Activated naive CD4-positive, alpha-beta T cell treated with anti-CD3 and anti-CD28 coated beads for 36 hours (primary cell): ENCODE measurements at regions of chr10 and their contacts with region 1.

Region 1: DNA sequence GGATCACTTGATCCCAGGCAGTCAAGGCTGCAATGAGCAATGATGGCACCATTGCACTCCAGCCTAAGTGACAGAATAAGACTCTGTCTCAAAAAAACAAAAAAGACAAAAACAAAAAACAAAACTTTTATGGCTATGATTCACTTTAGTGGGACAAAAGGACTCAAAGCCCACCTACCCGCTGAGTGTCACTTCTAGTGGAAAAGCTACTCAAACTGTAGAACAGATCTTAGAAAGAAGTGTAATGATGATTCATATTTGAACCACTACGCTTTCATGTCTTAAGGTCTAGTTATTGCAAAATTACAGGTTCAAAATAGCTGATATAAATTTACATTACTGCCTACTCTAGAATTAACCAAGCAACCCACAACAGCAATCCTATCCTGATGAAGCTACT is 47.1 kb upstream of the OTUD1 start:
- DNase-seq: peak; percentile 51
- H3K4me3 Mint-ChIP-seq: no peak overlapping the region
- H3K27ac Mint-ChIP-seq: no peak overlapping the region
- H3K4me1 Mint-ChIP-seq: peaks cover 11% of the 10 kb centered on the region
- H3K27me3 Mint-ChIP-seq: no peaks in the 10 kb centered on the region

Region 2: DNA sequence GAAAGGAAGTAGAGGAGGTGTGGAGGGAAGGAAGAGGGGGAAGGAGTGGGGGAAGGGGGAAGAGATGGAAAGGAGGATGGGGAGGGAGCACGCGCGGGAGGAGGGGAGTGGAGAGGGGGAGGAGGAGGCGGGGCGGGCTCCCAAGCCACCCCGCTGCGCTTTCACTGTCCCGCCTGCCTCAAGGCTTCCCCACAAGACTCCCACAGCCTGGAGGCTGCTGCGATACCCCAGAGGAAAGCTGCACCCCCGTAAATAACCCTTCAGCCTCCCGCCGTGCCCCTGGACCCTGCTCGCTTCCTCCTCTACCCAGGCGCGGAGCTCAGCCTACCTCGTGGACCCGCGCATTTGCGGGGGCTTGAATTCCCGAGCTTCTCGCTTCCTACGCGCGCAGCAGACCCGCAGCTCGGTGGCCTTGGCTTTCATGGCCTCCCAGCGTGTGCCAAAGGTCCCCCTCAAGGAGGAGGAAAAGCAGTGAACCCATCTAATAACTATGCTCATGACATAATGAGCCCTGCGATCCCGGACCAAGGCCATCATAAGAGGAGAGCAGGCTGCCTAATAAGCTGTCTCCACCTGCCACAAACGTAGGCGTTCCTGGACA is 47.5 kb before region 1 on chr10 and contains the start of gene C10orf67:
- CTCF ChIA-PET with region 1: interaction called, 3 read pairs
- intact Hi-C with region 1: loop called (anchors 1 kb)
- DNase-seq: no peak
- H3K4me3 Mint-ChIP-seq: peak within 1 kb of the TSS; percentile 82
- H3K27ac Mint-ChIP-seq: peak within 1 kb of the TSS; percentile 78
- H3K4me1 Mint-ChIP-seq: peaks cover 37% of the 10 kb centered on the region
- H3K27me3 Mint-ChIP-seq: no peaks in the 10 kb centered on the region
- total RNA-seq, gene C10orf67: 2.0 to 3.2 TPM

Region 3: GRCh38 chr10:23413629-23414089 is 21.8 kb after region 1 on chr10:
- CTCF ChIA-PET with region 1: no interaction called
- intact Hi-C with region 1: loop called (anchors 1 kb)
- DNase-seq: no peak
- H3K4me3 Mint-ChIP-seq: no peak overlapping the region
- H3K27ac Mint-ChIP-seq: peak overlapping the region; percentile 56
- H3K4me1 Mint-ChIP-seq: peaks cover 28% of the 10 kb centered on the region
- H3K27me3 Mint-ChIP-seq: no peaks in the 10 kb centered on the region